PC-9 (cell line): ENCODE measurements at regions of chr16 and their contacts with region 1.

Region 1: GRCh38 chr16:89860747-89861304 is 12.6 kb upstream of the TCF25 start:
- DNase-seq: peak; percentile 40 to 83
- H3K4me3 ChIP-seq: no peak overlapping the region
- H3K27ac ChIP-seq: no peak overlapping the region
- H3K4me1 ChIP-seq: peaks cover 9% of the 10 kb centered on the region
- H3K27me3 ChIP-seq: no peaks in the 10 kb centered on the region
- CTCF ChIP-seq: peak; percentile 99

Region 2: DNA sequence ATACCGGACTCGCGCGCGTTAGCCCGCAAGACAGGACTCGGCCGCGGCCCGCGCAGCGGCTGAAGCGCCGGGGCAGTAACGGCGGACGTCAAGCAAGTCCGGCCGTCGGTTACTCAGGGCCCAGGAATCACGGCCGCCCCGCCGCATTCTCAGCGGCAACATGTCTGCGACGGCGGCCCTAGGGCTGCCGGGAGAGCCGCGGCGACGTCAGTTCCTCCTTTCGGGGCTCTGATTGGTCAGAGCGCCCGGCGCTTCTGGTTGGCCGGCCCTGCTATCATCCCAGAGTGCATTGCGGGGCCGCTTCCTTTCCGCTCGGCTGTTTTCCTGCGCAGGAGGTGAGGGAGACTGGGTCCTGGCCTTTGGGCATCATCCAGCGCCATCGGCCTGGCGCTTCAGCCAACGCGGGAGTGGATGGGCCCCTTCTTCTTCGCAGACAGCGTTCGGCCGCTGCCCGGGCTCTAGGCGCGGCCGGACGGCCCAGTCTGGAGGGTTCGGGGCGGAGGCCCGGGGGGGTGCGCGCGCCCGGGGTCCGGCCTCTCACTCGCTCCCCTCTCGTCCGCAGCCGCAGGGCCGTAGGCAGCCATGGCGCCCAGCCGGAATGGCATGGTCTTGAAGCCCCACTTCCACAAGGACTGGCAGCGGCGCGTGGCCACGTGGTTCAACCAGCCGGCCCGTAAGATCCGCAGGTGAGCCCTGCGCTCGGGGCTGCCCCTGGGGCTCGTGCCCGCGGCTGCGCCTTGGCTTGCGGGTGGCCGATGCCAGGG is 300.3 kb before region 1 on chr16 and contains the start of gene RPL13:
- CTCF ChIA-PET with region 1: no interaction called
- POLR2A ChIA-PET with region 1: no interaction called
- intact Hi-C with region 1: no loop called
- DNase-seq: peak; percentile 91 to 95
- H3K4me3 ChIP-seq: peak within 1 kb of the TSS; percentile 92
- H3K27ac ChIP-seq: peak within 1 kb of the TSS; percentile 96
- H3K4me1 ChIP-seq: peaks cover 49% of the 10 kb centered on the region
- H3K27me3 ChIP-seq: no peaks in the 10 kb centered on the region
- CTCF ChIP-seq: no peak
- total RNA-seq, gene RPL13: 2,045 and 3,124 TPM in 2 replicates

Region 3: DNA sequence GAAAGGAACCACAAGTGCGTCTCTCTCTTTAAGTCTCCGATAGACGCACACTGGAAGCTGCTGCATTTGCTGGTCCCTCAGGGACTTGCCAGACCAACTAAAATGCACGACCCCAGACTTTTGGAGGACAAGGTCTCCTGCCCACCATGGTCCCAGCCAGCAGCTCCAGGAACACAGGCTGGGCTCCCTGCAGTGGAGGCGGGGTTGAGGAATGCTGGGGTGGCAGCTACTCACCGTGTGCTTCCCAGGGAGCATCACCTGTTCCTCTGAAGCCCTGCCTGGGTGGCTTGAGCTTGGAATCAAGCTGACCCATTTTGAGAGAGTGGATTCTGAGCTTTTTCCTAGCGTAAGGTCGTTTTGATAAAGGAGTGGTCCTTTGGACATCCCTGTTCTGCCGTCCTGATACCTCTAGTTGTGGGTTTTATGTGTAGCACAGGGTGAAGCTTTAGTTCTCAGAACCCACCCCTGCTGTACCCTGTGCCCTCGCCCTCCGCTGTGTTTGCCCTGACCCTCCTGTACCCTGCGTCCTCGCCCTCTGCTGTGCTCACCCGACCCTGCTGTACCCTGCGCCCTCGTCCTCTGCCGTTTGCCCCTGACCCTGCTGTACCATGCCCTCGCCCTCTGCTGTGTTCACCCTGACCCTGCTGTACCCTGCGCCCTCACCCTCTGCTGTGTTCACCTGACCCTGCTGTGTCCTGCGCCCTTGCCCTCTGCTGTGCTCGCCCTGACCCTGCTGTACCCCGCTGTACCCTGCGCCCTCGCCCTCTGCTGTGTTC is 128.5 kb before region 1 on chr16:
- CTCF ChIA-PET with region 1: interaction called, 10 read pairs
- POLR2A ChIA-PET with region 1: no interaction called
- intact Hi-C with region 1: no loop called
- DNase-seq: no peak
- H3K4me3 ChIP-seq: no peak overlapping the region
- H3K27ac ChIP-seq: no peak overlapping the region
- H3K4me1 ChIP-seq: no peaks in the 10 kb centered on the region
- H3K27me3 ChIP-seq: no peaks in the 10 kb centered on the region
- CTCF ChIP-seq: no peak

Region 4: GRCh38 chr16:89815639-89816348 is 45.0 kb before region 1 on chr16:
- CTCF ChIA-PET with region 1: interaction called, 14 read pairs
- POLR2A ChIA-PET with region 1: interaction called, 3 read pairs
- intact Hi-C with region 1: loop called (anchors 1 kb)
- DNase-seq: peak in 1 of 2 experiments; percentile 28
- H3K4me3 ChIP-seq: peak overlapping the region; percentile 75
- H3K27ac ChIP-seq: no peak overlapping the region
- H3K4me1 ChIP-seq: peaks cover 18% of the 10 kb centered on the region
- H3K27me3 ChIP-seq: no peaks in the 10 kb centered on the region
- CTCF ChIP-seq: no peak

Region 5: DNA sequence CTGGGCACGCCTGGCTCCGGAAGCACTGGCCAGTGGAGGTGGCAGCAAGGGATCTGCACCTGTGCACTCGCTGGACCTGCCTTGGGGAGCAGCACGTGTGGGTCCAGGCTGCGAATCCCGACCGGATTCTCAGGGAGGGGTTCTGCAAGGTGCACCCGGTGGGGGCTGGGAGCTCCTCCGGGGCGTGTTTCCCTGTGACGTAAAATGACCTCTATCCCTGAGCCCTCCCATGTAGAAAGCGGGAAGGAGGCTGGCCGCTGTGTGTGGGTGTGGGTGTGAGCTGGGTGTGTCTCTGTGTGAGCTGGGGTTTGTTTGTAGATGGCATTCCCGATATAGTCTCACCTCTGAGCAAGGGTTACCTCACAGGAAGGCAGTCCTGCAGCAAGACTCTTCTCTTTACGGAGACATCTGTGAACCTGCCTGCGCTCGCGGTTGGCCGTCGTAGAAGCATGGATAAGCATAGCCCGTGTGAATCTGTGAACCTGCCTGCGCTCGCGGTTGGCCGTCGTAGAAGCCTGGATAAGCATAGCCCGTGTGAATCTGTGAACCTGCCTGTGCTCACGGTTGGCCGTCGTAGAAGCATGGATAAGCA is 27.1 kb before region 1 on chr16:
- CTCF ChIA-PET with region 1: interaction called, 3 read pairs
- POLR2A ChIA-PET with region 1: no interaction called
- intact Hi-C with region 1: loop called (anchors 2 kb)
- DNase-seq: peak; percentile 92 to 94
- H3K4me3 ChIP-seq: no peak overlapping the region
- H3K27ac ChIP-seq: peak overlapping the region; percentile 53
- H3K4me1 ChIP-seq: peaks cover 62% of the 10 kb centered on the region
- H3K27me3 ChIP-seq: no peaks in the 10 kb centered on the region
- CTCF ChIP-seq: no peak

Region 6: GRCh38 chr16:89922884-89923690 is 62.3 kb after region 1 on chr16 and contains the start of gene TUBB3:
- CTCF ChIA-PET with region 1: no interaction called
- POLR2A ChIA-PET with region 1: no interaction called
- intact Hi-C with region 1: no loop called
- DNase-seq: peak in 1 of 2 experiments; percentile 89
- H3K4me3 ChIP-seq: peak within 1 kb of the TSS; percentile 72
- H3K27ac ChIP-seq: peak within 1 kb of the TSS; percentile 84
- H3K4me1 ChIP-seq: peaks cover 38% of the 10 kb centered on the region
- H3K27me3 ChIP-seq: no peaks in the 10 kb centered on the region
- CTCF ChIP-seq: no peak
- total RNA-seq, gene TUBB3: 79.6 and 105 TPM in 2 replicates